IMR-90 (cell line): ENCODE measurements at regions of chr2 and their contacts with region 1.

Region 1: DNA sequence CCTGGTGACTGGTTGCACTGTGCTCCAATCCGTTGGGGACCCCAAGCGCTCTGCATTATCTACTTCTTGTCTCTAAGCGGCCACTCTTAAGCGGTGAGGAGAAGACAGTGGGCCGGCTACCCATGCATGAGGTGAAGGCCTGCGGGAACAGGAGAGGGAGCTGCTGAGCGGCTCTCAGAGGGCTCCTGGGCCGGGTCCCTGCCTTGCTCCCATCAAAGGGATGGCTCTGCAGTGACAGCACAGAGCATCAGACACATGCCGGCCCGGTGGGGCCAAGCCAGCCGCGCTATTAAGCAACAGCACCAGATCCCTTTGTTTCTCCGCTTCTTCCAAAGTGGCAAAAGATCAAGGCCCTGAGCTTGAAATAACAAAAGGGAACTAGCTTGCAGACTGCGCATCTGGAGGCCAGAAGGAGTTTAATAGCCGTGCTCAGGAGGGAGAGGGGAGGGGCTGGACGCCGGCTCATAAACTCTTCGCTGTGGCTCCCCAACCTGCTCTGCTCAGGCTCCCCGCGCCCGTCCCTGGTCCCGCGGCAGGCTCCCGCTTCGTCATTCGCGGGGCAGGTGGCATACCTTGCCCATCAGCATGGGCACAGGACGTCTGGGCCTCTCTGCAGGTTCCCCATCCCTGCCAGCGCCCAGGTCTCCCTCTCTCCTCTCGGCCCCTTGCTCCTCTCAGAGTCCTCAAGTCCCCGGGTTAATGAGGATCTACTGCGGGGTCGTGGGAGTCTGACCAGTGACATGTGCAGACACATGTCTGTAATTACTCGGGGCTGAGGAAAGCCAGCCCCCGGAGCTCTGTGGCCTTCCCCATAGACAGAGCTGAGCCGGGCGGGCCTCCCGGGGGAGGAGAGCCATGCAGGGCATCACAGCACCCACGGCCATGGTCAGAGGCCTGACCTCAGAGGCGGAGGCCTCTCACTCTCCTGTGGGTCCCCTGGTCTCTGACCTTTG is 96.7 kb downstream of the ASB1 start:
- DNase-seq: peak; percentile 21
- ATAC-seq: peak; percentile 10; the same call in 1 of the 2 replicates
- H3K4me3 ChIP-seq: no peak overlapping the region
- H3K27ac ChIP-seq: no peak overlapping the region
- H3K4me1 ChIP-seq: no peaks in the 10 kb centered on the region; the same call in 1 of the 2 replicates
- H3K27me3 ChIP-seq: peaks cover 2% of the 10 kb centered on the region; the same call in 1 of the 2 replicates
- CTCF ChIP-seq: no peak
- POLR2A ChIP-seq: no peak
- RAD21 ChIP-seq: no peak

Region 2: DNA sequence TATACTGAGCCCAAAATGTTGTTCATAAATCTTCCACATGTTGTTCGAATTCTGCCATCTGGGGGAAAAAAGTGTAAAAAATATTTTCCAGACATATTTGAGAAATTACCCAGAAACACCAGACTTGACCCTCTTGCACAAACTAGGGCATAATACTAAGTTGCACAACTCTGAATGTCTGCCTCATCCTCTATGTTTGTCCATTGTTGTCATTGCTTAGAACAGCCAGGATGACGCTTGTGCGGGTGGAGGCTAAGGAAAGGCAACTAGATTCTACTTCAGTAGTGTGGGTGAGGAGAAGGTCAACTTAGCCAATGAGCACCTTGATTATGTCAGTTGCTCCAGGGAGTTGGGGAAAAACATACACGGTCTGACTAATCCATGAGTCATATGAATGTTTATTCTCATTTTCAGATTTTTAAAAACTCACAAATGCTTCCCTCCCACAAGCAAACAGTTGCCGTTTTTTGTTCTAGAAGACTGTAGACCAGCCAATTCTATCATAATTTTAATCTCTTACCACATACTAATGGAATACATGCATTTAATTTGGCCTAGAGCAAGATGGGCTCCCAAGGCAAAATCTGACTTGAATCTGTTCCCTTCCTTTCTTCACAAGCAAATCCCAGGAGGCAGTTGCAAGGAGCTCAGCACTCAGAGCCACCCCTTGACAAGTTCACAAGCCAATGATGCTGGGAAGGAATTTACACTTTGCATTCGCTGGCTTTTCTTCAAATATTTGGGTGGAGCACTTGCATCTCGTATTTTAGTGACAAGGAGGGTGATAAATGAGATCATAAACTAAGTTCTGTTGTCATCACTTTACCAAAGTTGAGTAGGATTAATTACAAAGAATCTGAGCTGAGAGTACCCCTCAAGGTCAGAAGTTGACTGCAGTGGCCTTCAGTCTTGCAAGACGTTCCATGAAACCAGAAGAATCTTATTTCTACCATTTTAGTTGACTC is 161.2 kb after region 1 on chr2:
- CTCF ChIA-PET with region 1: no interaction called
- POLR2A ChIA-PET with region 1: no interaction called
- dilution Hi-C with region 1: no loop called
- in situ Hi-C with region 1: no loop called
- intact Hi-C with region 1: loop called (anchors 10 kb)
- DNase-seq: peak; percentile 99
- ATAC-seq: peak; percentile 98
- H3K4me3 ChIP-seq: no peak overlapping the region
- H3K27ac ChIP-seq: peak overlapping the region; percentile 69
- H3K4me1 ChIP-seq: peaks cover 13% of the 10 kb centered on the region
- H3K27me3 ChIP-seq: no peaks in the 10 kb centered on the region
- CTCF ChIP-seq: no peak
- POLR2A ChIP-seq: no peak
- RAD21 ChIP-seq: no peak